ENCODE measurements at regions of chrX and their contacts with region 1.

Region 1: DNA sequence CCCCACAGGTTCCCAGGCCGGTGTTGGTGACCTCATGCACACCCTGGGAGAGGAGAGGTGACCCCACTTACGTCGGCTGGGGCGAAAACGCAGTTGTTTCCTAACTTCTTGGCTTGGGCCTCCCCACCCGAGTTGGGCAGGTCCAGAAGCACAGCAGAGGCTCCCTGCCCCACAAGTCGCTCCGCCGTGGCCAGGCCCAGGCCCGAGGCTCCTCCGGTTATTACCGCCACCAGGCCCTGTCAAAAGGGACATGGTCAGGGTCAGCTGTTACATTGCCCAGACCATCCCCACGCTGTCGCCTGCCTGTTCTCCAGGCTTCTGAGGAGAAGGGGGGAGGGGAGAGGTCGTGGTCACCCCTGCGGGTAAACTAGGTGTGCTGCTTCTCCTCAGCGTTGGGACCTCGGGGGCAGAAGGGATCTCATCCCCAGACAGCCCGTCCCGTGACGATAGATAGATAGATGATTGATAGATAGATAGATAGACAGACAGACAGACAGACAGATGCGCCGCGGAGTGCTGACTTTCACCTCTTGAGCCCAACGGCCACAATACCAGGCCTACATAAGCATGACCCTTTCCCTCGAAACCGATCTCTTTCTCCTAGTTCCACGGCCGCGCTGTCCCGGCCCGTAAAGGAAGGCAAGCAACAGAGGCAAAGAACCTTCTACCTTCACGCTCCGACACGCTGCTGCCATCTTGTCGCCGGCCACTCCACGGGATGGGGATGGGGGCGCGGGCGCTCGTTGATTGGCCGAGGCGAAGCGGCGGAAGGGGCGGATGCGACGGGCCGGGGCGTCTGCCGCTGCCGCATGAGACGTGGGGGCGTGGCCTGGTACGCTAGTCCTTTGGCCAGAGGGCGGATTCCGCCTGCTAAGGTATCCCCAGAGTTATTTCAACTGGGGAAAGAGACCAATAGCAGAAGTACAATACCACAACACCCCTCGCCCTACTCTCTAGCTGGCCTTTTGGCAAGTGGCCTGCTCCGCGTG is at the start of gene HSD17B10:
- DNase-seq: no peak
- H3K4me3 ChIP-seq: peak within 1 kb of the TSS; percentile 47 to 64
- H3K27ac ChIP-seq: no peak within 1 kb of the TSS
- H3K4me1 ChIP-seq: peaks cover 4% of the 10 kb centered on the region
- H3K27me3 ChIP-seq: no peaks in the 10 kb centered on the region
- CTCF ChIP-seq: no peak
- POLR2A ChIP-seq: peak in 1 of 2 donors; percentile 23
- total RNA-seq, gene HSD17B10: 42.0 TPM

Region 2: GRCh38 chrX:51461053-51462044 is 1972.6 kb before region 1 on chrX:
- intact Hi-C with region 1: no loop called
- DNase-seq: no peak
- H3K4me3 ChIP-seq: no peak overlapping the region
- H3K27ac ChIP-seq: no peak overlapping the region
- H3K4me1 ChIP-seq: no peaks in the 10 kb centered on the region
- H3K27me3 ChIP-seq: no peaks in the 10 kb centered on the region
- CTCF ChIP-seq: peak; percentile 53 to 67 (median 62)
- POLR2A ChIP-seq: no peak

Region 3: GRCh38 chrX:53317365-53318069 is 116.4 kb before region 1 on chrX:
- intact Hi-C with region 1: loop called (anchors 10 kb)
- DNase-seq: no peak
- H3K4me3 ChIP-seq: no peak overlapping the region
- H3K27ac ChIP-seq: no peak overlapping the region
- H3K4me1 ChIP-seq: peaks cover 24% of the 10 kb centered on the region
- H3K27me3 ChIP-seq: peaks cover 10% of the 10 kb centered on the region
- CTCF ChIP-seq: peak; percentile 50 to 67 (median 64)
- POLR2A ChIP-seq: no peak

Measured in vagina (tissue), 2 donors.